Activated CD4-positive, alpha-beta memory T cell treated with anti-CD3 and anti-CD28 coated beads for 36 hours (primary cell): ENCODE measurements at regions of chr6 and their contacts with region 1.

Region 1: DNA sequence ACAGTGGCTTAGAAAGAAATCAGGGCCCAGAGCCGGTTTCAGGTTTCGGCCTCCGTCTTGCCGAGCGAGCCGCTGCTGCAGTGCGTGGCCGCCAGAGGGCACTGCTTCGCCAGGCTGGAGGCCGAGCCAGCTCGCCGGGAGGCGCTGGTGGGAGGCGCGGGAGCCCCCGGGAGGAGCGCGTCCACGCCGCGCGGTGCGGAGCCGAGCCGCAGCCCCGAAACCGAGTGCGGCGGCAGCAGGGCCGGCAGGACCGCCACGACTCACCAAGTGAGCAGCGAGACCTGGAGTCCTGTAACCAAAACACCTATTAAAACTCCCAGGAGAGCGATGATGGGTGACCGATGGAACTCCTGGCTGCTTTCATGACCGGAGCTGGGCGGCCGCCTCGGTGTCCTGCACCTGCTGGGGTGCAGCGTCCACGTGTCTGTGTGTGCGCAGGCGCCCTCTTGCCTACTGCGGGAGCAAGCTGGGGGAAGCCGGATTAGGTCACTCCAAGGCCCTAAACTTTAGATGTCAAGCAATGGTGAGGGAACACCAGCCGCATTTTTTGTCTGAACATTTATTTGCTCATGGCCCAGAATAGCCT is 186.9 kb upstream of the UST start:
- DNase-seq: peak; percentile 77
- H3K4me3 Mint-ChIP-seq: no peak overlapping the region
- H3K27ac Mint-ChIP-seq: no peak overlapping the region
- H3K4me1 Mint-ChIP-seq: peaks cover 7% of the 10 kb centered on the region
- H3K27me3 Mint-ChIP-seq: peaks cover 15% of the 10 kb centered on the region

Region 2: GRCh38 chr6:148044261-148044751 is 515.6 kb before region 1 on chr6:
- CTCF ChIA-PET with region 1: no interaction called
- POLR2A ChIA-PET with region 1: no interaction called
- intact Hi-C with region 1: no loop called
- DNase-seq: no peak
- H3K4me3 Mint-ChIP-seq: no peak overlapping the region
- H3K27ac Mint-ChIP-seq: no peak overlapping the region
- H3K4me1 Mint-ChIP-seq: no peaks in the 10 kb centered on the region
- H3K27me3 Mint-ChIP-seq: no peaks in the 10 kb centered on the region

Region 3: DNA sequence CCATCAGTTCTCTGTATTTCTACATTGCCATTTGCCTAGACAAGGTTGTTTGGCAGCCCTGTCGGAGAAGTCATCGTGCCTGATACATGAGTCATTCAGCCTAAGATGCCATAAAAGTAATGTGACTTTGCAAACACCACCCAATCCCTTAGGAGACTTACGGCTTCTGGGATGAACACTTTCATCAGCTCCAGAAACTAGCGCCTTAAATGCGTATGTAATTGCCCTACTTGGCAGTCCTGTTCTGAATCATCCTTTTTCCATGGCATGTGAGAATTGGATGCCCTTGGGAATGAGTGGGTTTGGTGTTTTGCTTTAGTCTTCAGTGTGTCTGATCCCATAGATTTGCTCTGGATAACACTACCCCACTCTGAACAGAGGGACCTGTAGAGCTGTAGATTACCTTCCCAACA is 58.8 kb before region 1 on chr6:
- CTCF ChIA-PET with region 1: no interaction called
- POLR2A ChIA-PET with region 1: no interaction called
- intact Hi-C with region 1: no loop called
- DNase-seq: no peak
- H3K4me3 Mint-ChIP-seq: no peak overlapping the region
- H3K27ac Mint-ChIP-seq: no peak overlapping the region
- H3K4me1 Mint-ChIP-seq: no peaks in the 10 kb centered on the region
- H3K27me3 Mint-ChIP-seq: peaks cover 15% of the 10 kb centered on the region

Region 4: GRCh38 chr6:148608199-148608951 is 48.4 kb after region 1 on chr6:
- CTCF ChIA-PET with region 1: interaction called, 13 read pairs
- POLR2A ChIA-PET with region 1: no interaction called
- intact Hi-C with region 1: no loop called
- DNase-seq: no peak
- H3K4me3 Mint-ChIP-seq: no peak overlapping the region
- H3K27ac Mint-ChIP-seq: no peak overlapping the region
- H3K4me1 Mint-ChIP-seq: no peaks in the 10 kb centered on the region
- H3K27me3 Mint-ChIP-seq: peaks cover 9% of the 10 kb centered on the region